Panc1 (cell line): ENCODE measurements at regions of chr12 and their contacts with region 1.

Region 1: DNA sequence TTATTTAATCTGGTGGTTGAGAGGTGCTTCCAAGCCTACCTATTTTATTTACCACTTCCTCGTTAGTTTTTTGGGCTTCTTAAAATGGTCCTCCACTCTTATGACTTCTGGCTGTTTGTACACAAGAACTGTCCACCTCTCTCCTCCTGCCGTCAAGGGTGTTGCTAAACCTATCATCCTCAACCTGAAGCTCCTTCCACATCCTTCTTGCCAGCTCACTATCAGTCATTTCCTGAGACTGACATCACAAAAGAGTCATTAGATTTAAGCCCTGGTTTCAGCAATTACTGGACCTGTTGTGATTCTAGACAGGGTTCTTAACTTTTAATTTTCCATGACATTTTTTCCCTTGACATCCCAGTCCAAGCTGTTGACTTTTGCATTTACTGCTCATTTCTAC is 91.9 kb downstream of the BICD1 start:
- DNase-seq: peak; percentile 86
- ATAC-seq: peak; percentile 70; the same call in 1 of the 2 replicates
- H3K4me3 ChIP-seq: no peak overlapping the region
- H3K27ac ChIP-seq: no peak overlapping the region
- H3K4me1 ChIP-seq: no peaks in the 10 kb centered on the region
- H3K27me3 ChIP-seq: no peaks in the 10 kb centered on the region
- CTCF ChIP-seq: no peak

Region 2: GRCh38 chr12:31651893-31652521 is 546.5 kb before region 1 on chr12:
- CTCF ChIA-PET with region 1: interaction called, 10 read pairs
- POLR2A ChIA-PET with region 1: no interaction called
- in situ Hi-C with region 1: no loop called
- intact Hi-C with region 1: no loop called
- DNase-seq: no peak
- ATAC-seq: no peak
- H3K4me3 ChIP-seq: peak overlapping the region in 1 of 2 experiments; percentile 27; a peak in 1 of 4 replicates
- H3K27ac ChIP-seq: peak overlapping the region; percentile 72; the same call in 1 of the 2 replicates
- H3K4me1 ChIP-seq: 0 out of 2 replicates have a peak, but pooled peaks cover 3% of the 10 kb centered on the region
- H3K27me3 ChIP-seq: no peaks in the 10 kb centered on the region
- CTCF ChIP-seq: no peak

Region 3: DNA sequence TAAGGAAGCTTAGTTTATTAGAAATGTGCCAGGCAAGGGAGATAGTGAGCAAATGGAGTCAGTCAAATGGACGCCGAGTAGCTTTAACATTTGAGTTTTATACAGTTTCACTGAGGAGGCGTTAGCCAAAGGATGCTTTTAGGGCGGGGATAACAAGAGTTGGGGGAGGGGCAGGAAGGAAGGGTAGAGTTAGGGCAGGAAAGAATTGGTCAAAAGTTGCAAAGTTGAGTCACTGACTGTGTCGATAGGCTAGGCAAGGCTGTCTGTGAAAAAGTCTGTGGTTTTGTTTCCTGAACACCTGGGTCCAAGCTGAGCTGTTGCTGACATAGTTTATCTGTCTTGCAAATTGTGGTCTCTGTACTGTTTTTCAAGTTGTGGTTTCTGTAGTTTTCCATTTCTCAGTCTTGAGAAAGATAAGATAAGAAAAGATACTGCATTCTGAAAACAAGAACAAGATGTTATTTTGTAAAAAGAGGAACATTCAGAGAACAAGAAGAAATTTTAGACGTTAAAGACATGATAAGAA is 302.0 kb before region 1 on chr12:
- CTCF ChIA-PET with region 1: no interaction called
- POLR2A ChIA-PET with region 1: no interaction called
- in situ Hi-C with region 1: no loop called
- intact Hi-C with region 1: no loop called
- DNase-seq: no peak
- ATAC-seq: no peak
- H3K4me3 ChIP-seq: no peak overlapping the region
- H3K27ac ChIP-seq: no peak overlapping the region
- H3K4me1 ChIP-seq: no peaks in the 10 kb centered on the region
- H3K27me3 ChIP-seq: no peaks in the 10 kb centered on the region
- CTCF ChIP-seq: no peak

Region 4: GRCh38 chr12:32181498-32182175 is 16.9 kb before region 1 on chr12:
- CTCF ChIA-PET with region 1: interaction called, 10 read pairs
- POLR2A ChIA-PET with region 1: no interaction called
- in situ Hi-C with region 1: no loop called
- intact Hi-C with region 1: no loop called
- DNase-seq: no peak
- ATAC-seq: no peak
- H3K4me3 ChIP-seq: no peak overlapping the region
- H3K27ac ChIP-seq: no peak overlapping the region
- H3K4me1 ChIP-seq: no peaks in the 10 kb centered on the region
- H3K27me3 ChIP-seq: no peaks in the 10 kb centered on the region
- CTCF ChIP-seq: no peak

Region 5: GRCh38 chr12:32285489-32285888 is 86.9 kb after region 1 on chr12:
- CTCF ChIA-PET with region 1: interaction called, 10 read pairs
- POLR2A ChIA-PET with region 1: no interaction called
- in situ Hi-C with region 1: no loop called
- intact Hi-C with region 1: no loop called
- DNase-seq: no peak
- ATAC-seq: no peak
- H3K4me3 ChIP-seq: no peak overlapping the region
- H3K27ac ChIP-seq: no peak overlapping the region
- H3K4me1 ChIP-seq: no peaks in the 10 kb centered on the region
- H3K27me3 ChIP-seq: no peaks in the 10 kb centered on the region
- CTCF ChIP-seq: no peak